ENCODE measurements at regions of chr22 and their contacts with region 1.

Region 1: DNA sequence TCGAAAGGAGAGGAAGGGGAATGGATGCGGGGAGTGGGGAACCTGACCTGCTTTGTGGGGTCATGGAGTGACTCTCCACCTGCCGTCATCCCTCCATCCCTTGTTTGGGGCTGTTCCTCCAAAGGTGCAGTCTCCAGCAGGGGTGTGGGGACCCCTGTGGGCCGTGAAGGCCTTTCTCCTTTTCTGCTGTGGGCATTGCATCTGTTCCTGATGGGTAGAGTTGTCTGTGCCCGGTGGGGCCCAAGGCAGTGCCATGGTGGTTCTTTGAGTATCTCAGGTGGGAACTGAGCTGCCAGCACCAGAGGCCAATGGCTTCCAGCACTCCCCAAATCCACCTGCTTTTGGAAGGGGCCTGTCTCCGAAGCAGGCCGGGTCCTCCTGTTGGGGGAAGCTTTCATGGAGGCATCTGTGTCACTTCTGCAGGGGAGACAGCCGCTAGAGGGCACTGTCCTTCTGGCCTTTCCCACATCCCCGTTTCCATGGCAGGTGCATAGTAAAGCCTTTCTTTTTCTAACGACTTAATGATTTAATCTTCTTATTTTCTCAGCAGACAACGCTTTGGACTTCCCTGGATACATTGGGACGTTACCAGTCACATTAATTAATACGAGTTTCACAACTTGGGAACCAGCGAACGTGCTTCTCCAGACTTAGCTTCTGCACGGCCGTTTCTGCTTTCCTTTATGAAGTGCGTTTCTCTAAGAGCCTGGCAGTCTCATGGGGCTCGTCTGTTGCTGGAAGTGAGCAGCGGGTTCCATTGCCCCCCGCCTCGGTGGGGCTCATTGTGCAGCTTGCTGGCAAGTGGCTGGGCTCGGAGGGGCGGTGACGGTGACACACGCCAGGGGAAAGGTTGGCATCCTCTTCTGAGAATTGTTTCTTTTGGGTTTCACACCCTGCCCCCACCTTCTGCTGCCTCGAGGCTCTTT is 57.1 kb downstream of the PARVB start:
- DNase-seq: peak; percentile 61 to 62
- H3K4me3 ChIP-seq: no peak overlapping the region
- H3K4me3 Mint-ChIP-seq: no peak overlapping the region
- H3K27ac Mint-ChIP-seq: no peak overlapping the region
- H3K4me1 ChIP-seq: no peaks in the 10 kb centered on the region
- H3K4me1 Mint-ChIP-seq: no peaks in the 10 kb centered on the region
- H3K27me3 ChIP-seq: no peaks in the 10 kb centered on the region
- H3K27me3 Mint-ChIP-seq: no peaks in the 10 kb centered on the region
- CTCF ChIP-seq: peak; percentile 79 to 90

Region 2: GRCh38 chr22:44103735-44104480 is 22.7 kb after region 1 on chr22:
- CTCF ChIA-PET with region 1: no interaction called
- POLR2A ChIA-PET with region 1: no interaction called
- intact Hi-C with region 1: no loop called
- DNase-seq: no peak
- H3K4me3 ChIP-seq: no peak overlapping the region
- H3K4me3 Mint-ChIP-seq: no peak overlapping the region
- H3K27ac Mint-ChIP-seq: no peak overlapping the region
- H3K4me1 ChIP-seq: no peaks in the 10 kb centered on the region
- H3K4me1 Mint-ChIP-seq: no peaks in the 10 kb centered on the region
- H3K27me3 ChIP-seq: no peaks in the 10 kb centered on the region
- H3K27me3 Mint-ChIP-seq: no peaks in the 10 kb centered on the region
- CTCF ChIP-seq: no peak

Region 3: DNA sequence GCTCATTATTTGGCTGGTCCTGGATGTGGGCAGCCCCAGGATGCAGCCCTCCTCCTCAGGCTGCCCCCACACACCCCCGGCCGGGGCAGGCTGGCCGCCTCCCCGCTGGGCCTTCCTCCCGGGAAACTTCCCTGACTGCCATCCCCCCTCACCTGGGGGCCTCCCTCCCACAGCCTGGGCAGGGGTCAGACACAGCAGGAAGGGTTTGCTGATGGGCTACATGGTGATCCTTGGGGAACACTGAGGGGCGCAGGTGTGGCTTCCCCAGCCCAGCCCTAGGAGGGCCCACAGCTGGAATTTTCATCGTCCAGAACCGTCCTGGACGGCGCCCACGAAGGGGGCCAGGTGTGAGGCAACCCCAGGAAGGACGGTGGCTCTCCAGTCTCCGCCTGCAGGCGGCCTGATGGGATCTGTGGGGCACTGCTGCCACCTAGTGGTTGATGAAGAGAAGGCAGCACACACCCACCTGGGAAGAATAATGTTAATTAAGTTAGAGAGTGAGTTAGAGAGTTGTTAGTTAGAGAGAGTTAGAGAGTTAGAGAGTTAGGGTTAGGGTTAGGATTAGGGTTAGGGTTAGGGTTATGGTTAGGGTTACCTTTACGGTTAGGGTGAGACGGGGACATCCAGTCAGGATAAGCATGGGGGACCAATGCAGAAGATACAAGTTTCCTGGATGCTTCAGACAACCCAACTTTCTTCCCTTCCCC is 544.9 kb after region 1 on chr22:
- CTCF ChIA-PET with region 1: interaction called, 4 read pairs
- POLR2A ChIA-PET with region 1: no interaction called
- intact Hi-C with region 1: loop called (anchors 5 kb)
- DNase-seq: peak; percentile 67 to 81
- H3K4me3 ChIP-seq: no peak overlapping the region
- H3K4me3 Mint-ChIP-seq: no peak overlapping the region
- H3K27ac Mint-ChIP-seq: no peak overlapping the region
- H3K4me1 ChIP-seq: peaks cover 3% of the 10 kb centered on the region; the same call in 1 of the 2 replicates
- H3K4me1 Mint-ChIP-seq: peaks cover 7% of the 10 kb centered on the region
- H3K27me3 ChIP-seq: no peaks in the 10 kb centered on the region
- H3K27me3 Mint-ChIP-seq: peaks cover 19% of the 10 kb centered on the region
- CTCF ChIP-seq: peak; percentile 94 to 97